Colonic mucosa (tissue), 4 donors: ENCODE measurements at regions of chr17 and their contacts with region 1.

Region 1: GRCh38 chr17:12730931-12731521 is 58.3 kb upstream of the ARHGAP44 start:
- DNase-seq: peak; percentile 92
- H3K4me3 ChIP-seq: no peak overlapping the region
- H3K27ac ChIP-seq: peak overlapping the region; percentile 80
- H3K4me1 ChIP-seq: peaks cover 11% of the 10 kb centered on the region
- H3K27me3 ChIP-seq: no peaks in the 10 kb centered on the region
- CTCF ChIP-seq: no peak

Region 2: DNA sequence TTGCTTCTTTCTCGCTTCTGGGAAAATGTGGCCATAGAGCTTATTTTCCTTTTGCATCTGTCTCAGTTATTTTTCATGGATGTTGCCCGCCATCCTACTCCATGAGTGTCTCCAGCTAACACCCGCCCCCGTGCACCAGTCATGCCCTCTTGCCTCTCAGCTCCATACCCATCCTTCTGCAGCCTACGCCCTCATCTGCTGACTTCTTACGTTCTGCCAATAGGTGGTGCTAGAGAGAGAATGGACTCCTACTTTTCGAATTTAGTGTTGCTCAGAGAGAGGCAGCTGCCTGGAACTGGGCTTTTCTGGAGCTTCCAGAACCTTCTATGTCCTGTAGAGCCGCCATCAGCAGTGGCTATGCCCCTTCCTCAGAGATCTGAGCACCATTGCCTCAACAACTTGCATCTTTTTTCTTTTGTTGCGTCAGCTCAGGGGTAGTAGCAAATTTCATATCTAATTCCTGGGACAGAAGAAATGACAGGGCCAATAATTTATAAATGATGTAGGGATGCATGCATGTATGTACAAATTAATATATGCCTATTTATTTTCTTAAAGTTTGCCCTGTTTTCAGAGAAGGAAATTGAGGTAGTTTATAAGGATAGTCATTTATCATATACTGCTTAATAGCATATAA is 185.0 kb before region 1 on chr17:
- intact Hi-C with region 1: loop called (anchors 10 kb)
- DNase-seq: peak; percentile 47
- H3K4me3 ChIP-seq: no peak overlapping the region
- H3K27ac ChIP-seq: no peak overlapping the region
- H3K4me1 ChIP-seq: no peaks in the 10 kb centered on the region
- H3K27me3 ChIP-seq: no peaks in the 10 kb centered on the region
- CTCF ChIP-seq: peak; percentile 68